Body of pancreas (tissue), 4 donors: ENCODE measurements at regions of chr1 and their contacts with region 1.

Region 1: DNA sequence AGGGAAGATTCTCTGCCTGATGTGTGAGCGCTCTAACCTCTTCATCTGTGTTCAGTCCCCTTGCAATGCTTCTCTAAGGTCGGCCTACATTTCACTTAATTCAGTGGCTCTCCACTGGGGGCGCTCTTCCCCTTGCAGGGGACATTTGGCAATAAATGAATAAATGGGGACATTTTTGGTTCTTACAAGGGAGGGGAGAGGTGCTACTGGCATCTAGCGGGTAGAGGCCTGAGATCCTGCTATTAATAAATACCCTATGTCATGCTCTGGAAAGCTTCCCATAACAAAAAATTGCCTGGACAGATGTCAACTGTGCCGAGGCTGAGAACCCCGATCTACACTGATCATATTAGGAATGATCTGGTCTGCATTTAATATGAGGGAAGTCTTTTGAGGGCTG is 25.9 kb upstream of the DNAJC11 start:
- DNase-seq: peak; percentile 42 to 60 (median 48)
- ATAC-seq: peak; percentile 56
- H3K4me3 ChIP-seq: no peak overlapping the region
- H3K27ac ChIP-seq: no peak overlapping the region
- H3K4me1 ChIP-seq: no peaks in the 10 kb centered on the region
- H3K27me3 ChIP-seq: no peaks in the 10 kb centered on the region
- CTCF ChIP-seq: peak; percentile 52 to 86 (median 72)
- POLR2A ChIP-seq: no peak

Region 2: GRCh38 chr1:6602669-6603237 is 124.8 kb before region 1 on chr1 and contains the start of gene KLHL21:
- intact Hi-C with region 1: no loop called
- DNase-seq: peak; percentile 88 to 92 (median 90)
- ATAC-seq: peak; percentile 73
- H3K4me3 ChIP-seq: peak within 1 kb of the TSS; percentile 53 to 75
- H3K27ac ChIP-seq: peak within 1 kb of the TSS; percentile 86 to 99 (median 96)
- H3K4me1 ChIP-seq: peaks cover 48% of the 10 kb centered on the region
- H3K27me3 ChIP-seq: no peaks in the 10 kb centered on the region
- CTCF ChIP-seq: peak in 1 of 7 experiments; percentile 29
- POLR2A ChIP-seq: peak; percentile 83 to 92 (median 86)
- total RNA-seq, gene KLHL21: 38.4 to 60.0 TPM

Region 3: DNA sequence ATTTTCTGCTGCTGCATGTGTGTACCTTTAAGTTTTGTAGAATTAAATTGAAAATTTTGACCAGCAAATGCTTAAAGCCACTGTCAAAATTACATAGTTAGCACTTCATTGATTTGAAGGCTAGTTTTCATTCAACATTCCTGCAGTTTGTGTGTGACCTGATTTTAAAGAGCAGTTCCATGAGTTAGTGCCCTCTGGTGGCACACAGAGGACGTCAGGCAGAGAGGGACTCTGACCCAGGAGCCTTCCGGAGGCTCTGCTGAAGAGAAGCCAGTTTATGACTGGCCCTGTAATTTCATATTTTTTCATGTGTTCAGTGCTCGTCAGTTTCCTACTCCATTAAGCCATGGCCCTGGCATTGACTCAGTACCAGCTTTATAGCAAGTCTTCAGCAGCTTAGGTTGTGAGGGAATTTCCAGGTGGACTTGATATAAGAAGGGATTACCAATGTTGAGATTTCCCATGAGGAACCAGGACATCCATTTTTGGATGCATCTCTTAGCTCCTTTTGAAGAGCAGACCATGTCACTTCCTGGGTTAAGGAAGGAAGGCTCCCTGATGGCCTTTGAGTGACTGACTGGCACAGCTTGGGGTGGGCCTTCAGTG is 162.4 kb after region 1 on chr1:
- intact Hi-C with region 1: loop called (anchors 10 kb)
- DNase-seq: peak; percentile 65 to 77 (median 70)
- ATAC-seq: peak; percentile 86
- H3K4me3 ChIP-seq: no peak overlapping the region
- H3K27ac ChIP-seq: no peak overlapping the region
- H3K4me1 ChIP-seq: peaks cover 7% of the 10 kb centered on the region
- H3K27me3 ChIP-seq: no peaks in the 10 kb centered on the region
- CTCF ChIP-seq: peak; percentile 62 to 88 (median 77)
- POLR2A ChIP-seq: no peak

Region 4: DNA sequence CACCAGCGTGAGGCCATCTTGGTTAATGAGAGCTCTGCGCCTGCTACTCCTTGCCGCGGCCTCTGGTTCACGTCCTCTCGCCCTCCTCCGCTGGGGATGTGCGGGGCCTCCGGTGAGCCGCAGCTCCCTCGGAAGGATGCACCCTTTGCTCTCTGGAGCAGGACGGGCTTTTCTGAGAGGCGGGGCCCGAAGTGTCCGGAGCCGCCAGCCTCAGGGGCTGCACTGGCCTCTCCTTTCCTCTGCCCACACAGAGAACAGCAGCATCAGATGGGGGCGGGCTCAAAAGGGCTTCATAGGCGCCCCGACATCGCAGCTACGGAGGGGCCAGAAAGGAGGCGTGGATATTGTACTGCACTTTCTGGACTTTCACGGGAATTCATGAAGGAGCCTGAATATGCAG is 342.4 kb after region 1 on chr1:
- intact Hi-C with region 1: loop called (anchors 10 kb)
- DNase-seq: no peak
- ATAC-seq: peak; percentile 33
- H3K4me3 ChIP-seq: no peak overlapping the region
- H3K27ac ChIP-seq: no peak overlapping the region
- H3K4me1 ChIP-seq: no peaks in the 10 kb centered on the region
- H3K27me3 ChIP-seq: no peaks in the 10 kb centered on the region
- CTCF ChIP-seq: no peak
- POLR2A ChIP-seq: no peak

Region 5: DNA sequence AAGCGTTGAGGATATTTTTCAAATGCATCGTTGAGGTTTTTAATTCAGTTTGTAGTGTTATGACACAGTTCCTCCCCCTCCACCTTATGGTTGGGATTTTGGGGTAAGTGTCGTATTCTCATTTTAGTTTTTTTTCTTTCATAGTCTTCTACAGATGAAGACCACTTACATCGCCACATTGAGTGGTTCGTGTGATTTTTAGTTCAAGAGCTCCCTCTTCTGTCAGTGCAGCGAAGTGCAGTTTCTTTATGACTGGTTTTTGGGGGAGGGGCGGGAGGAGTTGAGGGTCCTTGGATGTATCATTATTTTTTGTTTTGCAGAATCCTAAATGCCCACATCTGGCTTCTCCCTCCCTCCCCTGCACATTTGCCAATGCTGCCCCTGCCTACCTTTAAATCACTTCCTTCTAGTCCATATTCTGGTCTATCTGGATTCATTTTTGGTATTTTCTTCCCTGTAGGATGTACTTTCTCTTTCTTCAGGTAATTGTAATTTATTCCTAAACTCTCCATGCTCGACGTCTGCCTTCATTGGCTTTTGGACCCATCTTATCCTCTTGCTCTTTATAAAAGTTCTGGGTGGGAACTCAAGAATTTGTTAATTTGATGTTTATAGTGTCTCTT is 490.8 kb after region 1 on chr1:
- intact Hi-C with region 1: loop called (anchors 5 kb)
- DNase-seq: peak in 3 of 4 donors; percentile 44 to 66 (median 50)
- ATAC-seq: no peak
- H3K4me3 ChIP-seq: no peak overlapping the region
- H3K27ac ChIP-seq: no peak overlapping the region
- H3K4me1 ChIP-seq: no peaks in the 10 kb centered on the region
- H3K27me3 ChIP-seq: no peaks in the 10 kb centered on the region
- CTCF ChIP-seq: peak; percentile 39 to 87 (median 78)
- POLR2A ChIP-seq: no peak

Region 6: GRCh38 chr1:7646981-7647901 is 919.7 kb after region 1 on chr1:
- intact Hi-C with region 1: loop called (anchors 5 kb)
- DNase-seq: peak; percentile 60 to 80 (median 74)
- ATAC-seq: peak; percentile 41
- H3K4me3 ChIP-seq: no peak overlapping the region
- H3K27ac ChIP-seq: no peak overlapping the region
- H3K4me1 ChIP-seq: peaks cover 5% of the 10 kb centered on the region
- H3K27me3 ChIP-seq: no peaks in the 10 kb centered on the region
- CTCF ChIP-seq: peak; percentile 79 to 98 (median 90)
- POLR2A ChIP-seq: no peak